Activated B cell treated with CpG ODN at 0.5 μM for 24 hours (primary cell): ENCODE measurements at regions of chr20 and their contacts with region 1.

Region 1: GRCh38 chr20:1965520-1966351 is 28.1 kb downstream of the PDYN start:
- DNase-seq: peak; percentile 81
- ATAC-seq: peak; percentile 91
- H3K4me3 Mint-ChIP-seq: peak overlapping the region; percentile 77
- H3K27ac Mint-ChIP-seq: peak overlapping the region; percentile 78
- H3K4me1 Mint-ChIP-seq: peaks cover 17% of the 10 kb centered on the region
- H3K27me3 Mint-ChIP-seq: peaks cover 1% of the 10 kb centered on the region
- CTCF ChIP-seq: peak; percentile 68

Region 2: DNA sequence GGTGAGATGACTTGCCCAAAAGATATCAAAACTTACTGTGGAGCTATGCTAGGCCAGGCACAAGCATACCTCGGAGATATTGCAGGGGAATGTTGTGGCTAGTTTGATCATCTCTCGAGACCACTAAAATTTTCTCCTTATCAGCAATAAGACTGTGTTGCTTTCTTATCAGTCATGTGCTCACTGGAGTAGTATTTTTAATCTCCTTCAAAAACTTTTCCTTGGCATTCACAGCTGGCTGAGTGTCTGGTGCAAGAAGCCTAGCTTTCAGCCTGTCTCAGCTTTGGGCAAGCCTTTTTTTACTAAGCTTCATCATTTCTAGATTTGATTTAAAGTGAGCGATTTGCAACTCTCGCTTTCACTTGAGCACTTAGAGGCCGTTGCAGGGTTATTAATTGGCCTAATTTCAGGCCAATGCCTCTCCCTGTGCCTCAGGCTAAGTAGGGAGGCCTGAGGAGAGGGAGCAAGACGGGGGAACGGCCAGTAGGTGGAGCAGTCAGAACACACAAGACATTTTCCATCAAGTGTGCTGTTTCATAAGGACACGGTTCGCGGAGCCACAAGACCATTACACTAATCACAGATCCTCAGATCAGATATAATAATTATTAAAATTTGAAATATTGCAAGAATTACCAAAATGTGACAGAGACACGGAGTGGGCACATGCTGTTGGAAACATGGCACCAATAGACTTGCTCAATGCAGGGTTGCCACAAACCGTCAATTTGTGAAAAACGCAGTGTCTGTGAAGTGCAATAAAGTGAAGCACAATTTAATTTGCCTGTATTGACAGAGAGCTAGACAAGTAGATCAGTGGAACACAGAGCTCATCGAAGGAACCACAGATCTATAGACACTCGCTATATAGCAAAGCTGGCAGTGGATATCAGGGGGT is 201.4 kb before region 1 on chr20:
- CTCF ChIA-PET with region 1: interaction called, 3 read pairs
- POLR2A ChIA-PET with region 1: no interaction called
- intact Hi-C with region 1: loop called (anchors 1 kb)
- DNase-seq: peak; percentile 46
- ATAC-seq: peak; percentile 86
- H3K4me3 Mint-ChIP-seq: no peak overlapping the region
- H3K27ac Mint-ChIP-seq: no peak overlapping the region
- H3K4me1 Mint-ChIP-seq: peaks cover 2% of the 10 kb centered on the region
- H3K27me3 Mint-ChIP-seq: peaks cover 5% of the 10 kb centered on the region
- CTCF ChIP-seq: peak; percentile 45

Region 3: GRCh38 chr20:1870792-1871550 is 94.8 kb before region 1 on chr20:
- CTCF ChIA-PET with region 1: interaction called, 4 read pairs
- POLR2A ChIA-PET with region 1: no interaction called
- intact Hi-C with region 1: loop called (anchors 1 kb)
- DNase-seq: peak; percentile 58
- ATAC-seq: peak; percentile 76
- H3K4me3 Mint-ChIP-seq: peak overlapping the region; percentile 59
- H3K27ac Mint-ChIP-seq: peak overlapping the region; percentile 79
- H3K4me1 Mint-ChIP-seq: peaks cover 62% of the 10 kb centered on the region
- H3K27me3 Mint-ChIP-seq: peaks cover 11% of the 10 kb centered on the region
- CTCF ChIP-seq: no peak

Region 4: GRCh38 chr20:1900321-1900801 is 65.4 kb before region 1 on chr20:
- CTCF ChIA-PET with region 1: interaction called, 4 read pairs
- POLR2A ChIA-PET with region 1: interaction called, 4 read pairs
- intact Hi-C with region 1: loop called (anchors 1 kb)
- DNase-seq: no peak
- ATAC-seq: peak; percentile 11
- H3K4me3 Mint-ChIP-seq: no peak overlapping the region
- H3K27ac Mint-ChIP-seq: no peak overlapping the region
- H3K4me1 Mint-ChIP-seq: peaks cover 49% of the 10 kb centered on the region
- H3K27me3 Mint-ChIP-seq: no peaks in the 10 kb centered on the region
- CTCF ChIP-seq: no peak

Region 5: GRCh38 chr20:1993986-1994385 is 28.2 kb after region 1 on chr20 and contains the start of gene PDYN:
- CTCF ChIA-PET with region 1: no interaction called
- POLR2A ChIA-PET with region 1: no interaction called
- intact Hi-C with region 1: no loop called
- DNase-seq: no peak
- ATAC-seq: no peak
- H3K4me3 Mint-ChIP-seq: no peak within 1 kb of the TSS
- H3K27ac Mint-ChIP-seq: no peak within 1 kb of the TSS
- H3K4me1 Mint-ChIP-seq: no peaks in the 10 kb centered on the region
- H3K27me3 Mint-ChIP-seq: peaks cover 50% of the 10 kb centered on the region
- CTCF ChIP-seq: no peak
- total RNA-seq, gene PDYN: not detected in 2 replicates

Region 6: GRCh38 chr20:2093159-2093781 is 127.5 kb after region 1 on chr20:
- CTCF ChIA-PET with region 1: interaction called, 5 read pairs
- POLR2A ChIA-PET with region 1: no interaction called
- intact Hi-C with region 1: loop called (anchors 2 kb)
- DNase-seq: no peak
- ATAC-seq: no peak
- H3K4me3 Mint-ChIP-seq: no peak overlapping the region
- H3K27ac Mint-ChIP-seq: no peak overlapping the region
- H3K4me1 Mint-ChIP-seq: peaks cover 5% of the 10 kb centered on the region
- H3K27me3 Mint-ChIP-seq: peaks cover 32% of the 10 kb centered on the region
- CTCF ChIP-seq: no peak

Region 7: DNA sequence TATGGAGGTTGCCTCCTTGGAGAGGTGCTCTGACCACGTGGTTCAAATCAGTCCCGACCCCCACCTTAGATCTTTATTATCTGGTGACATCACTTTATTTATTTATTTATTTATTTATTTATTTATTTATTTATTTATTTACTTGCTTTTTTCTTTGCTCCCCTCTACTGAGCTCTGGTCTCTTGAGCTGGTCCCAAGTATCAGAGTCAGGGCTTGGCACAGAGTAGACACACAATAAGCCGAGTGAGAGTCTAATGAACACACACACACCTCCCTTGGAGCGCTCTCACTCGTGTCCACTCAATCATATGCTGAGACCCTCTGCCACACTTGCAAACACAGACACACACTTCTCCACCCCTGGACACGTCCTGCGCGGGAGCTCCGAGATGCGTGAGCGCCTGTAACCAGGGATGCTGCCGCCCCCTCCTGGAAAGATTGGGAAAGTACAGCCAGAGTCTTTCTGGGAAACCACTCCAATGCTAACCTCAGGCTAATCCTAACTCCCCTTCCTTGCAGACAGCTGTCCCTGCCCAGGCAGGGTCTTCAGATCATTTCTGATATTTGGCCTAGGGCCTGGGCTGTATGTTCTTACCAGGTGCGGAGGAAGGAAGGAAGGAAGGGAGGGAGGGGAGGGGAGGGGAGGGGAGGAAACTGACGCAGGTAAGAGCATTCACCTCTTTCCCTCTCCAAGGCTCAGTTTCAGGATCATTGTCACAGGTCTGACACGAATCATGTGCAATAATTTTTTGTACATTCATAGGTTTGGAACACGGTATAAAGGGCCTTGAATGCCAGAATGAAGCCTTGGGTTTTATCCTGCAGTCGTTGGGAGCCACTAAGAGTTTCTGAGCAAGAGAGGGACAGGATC is 206.8 kb after region 1 on chr20:
- CTCF ChIA-PET with region 1: interaction called, 51 read pairs
- POLR2A ChIA-PET with region 1: interaction called, 3 read pairs
- intact Hi-C with region 1: loop called (anchors 1 kb)
- DNase-seq: peak; percentile 53
- ATAC-seq: peak; percentile 83
- H3K4me3 Mint-ChIP-seq: no peak overlapping the region
- H3K27ac Mint-ChIP-seq: no peak overlapping the region
- H3K4me1 Mint-ChIP-seq: peaks cover 4% of the 10 kb centered on the region
- H3K27me3 Mint-ChIP-seq: peaks cover 11% of the 10 kb centered on the region
- CTCF ChIP-seq: no peak

Region 8: GRCh38 chr20:2314759-2315439 is 349.2 kb after region 1 on chr20:
- CTCF ChIA-PET with region 1: no interaction called
- POLR2A ChIA-PET with region 1: no interaction called
- intact Hi-C with region 1: no loop called
- DNase-seq: no peak
- ATAC-seq: no peak
- H3K4me3 Mint-ChIP-seq: no peak overlapping the region
- H3K27ac Mint-ChIP-seq: no peak overlapping the region
- H3K4me1 Mint-ChIP-seq: no peaks in the 10 kb centered on the region
- H3K27me3 Mint-ChIP-seq: no peaks in the 10 kb centered on the region
- CTCF ChIP-seq: no peak

Region 9: GRCh38 chr20:2451939-2452732 is 486.4 kb after region 1 on chr20:
- CTCF ChIA-PET with region 1: interaction called, 3 read pairs
- POLR2A ChIA-PET with region 1: no interaction called
- intact Hi-C with region 1: loop called (anchors 1 kb)
- DNase-seq: peak; percentile 23
- ATAC-seq: peak; percentile 54
- H3K4me3 Mint-ChIP-seq: no peak overlapping the region
- H3K27ac Mint-ChIP-seq: no peak overlapping the region
- H3K4me1 Mint-ChIP-seq: peaks cover 2% of the 10 kb centered on the region
- H3K27me3 Mint-ChIP-seq: no peaks in the 10 kb centered on the region
- CTCF ChIP-seq: no peak